ENCODE measurements at regions of chr13 and their contacts with region 1.

Region 1: DNA sequence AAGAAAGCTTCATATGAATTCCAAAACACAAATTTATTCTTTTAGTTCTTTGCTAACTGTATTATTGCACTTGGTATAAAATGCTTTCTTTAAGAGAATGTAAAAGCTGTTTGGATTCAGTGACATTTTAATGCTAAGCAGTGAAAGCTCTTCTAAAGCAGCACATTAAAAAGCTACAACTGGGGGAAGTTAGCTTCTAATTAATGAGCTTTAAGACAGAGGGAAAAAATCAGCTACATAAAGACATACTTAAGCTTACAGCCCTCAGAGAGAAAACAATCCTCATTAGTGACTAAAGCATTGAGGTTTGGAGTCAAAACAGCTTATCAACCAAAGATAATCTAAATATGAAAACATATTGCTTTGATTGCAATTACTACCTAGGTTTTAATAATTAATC is 1222.2 kb upstream of the SPRY2 start:
- DNase-seq: no peak
- H3K4me3 ChIP-seq: no peak overlapping the region
- H3K27ac ChIP-seq: no peak overlapping the region
- H3K4me1 ChIP-seq: no peaks in the 10 kb centered on the region
- H3K27me3 ChIP-seq: no peaks in the 10 kb centered on the region
- CTCF ChIP-seq: no peak

Region 2: DNA sequence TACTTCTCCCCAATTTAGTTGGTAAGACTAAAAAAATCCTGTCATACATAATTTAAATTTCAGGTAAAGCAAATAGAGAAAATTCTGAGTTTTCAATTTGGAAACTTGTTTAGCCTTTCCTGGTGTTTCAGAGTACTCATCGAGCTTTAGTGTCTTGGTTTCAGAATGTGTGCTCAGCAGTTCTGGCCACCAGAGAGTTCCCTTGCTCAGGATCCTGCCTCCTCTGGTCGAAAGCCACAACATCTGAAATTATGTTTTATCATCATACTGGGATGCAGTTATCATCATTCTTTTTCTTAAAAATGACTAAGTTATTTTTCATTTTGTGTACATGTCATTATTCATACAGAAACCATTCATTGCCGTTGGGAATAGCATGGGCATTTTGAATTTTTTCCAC is 959.0 kb before region 1 on chr13:
- CTCF ChIA-PET with region 1: no interaction called
- POLR2A ChIA-PET with region 1: no interaction called
- intact Hi-C with region 1: no loop called
- DNase-seq: no peak
- H3K4me3 ChIP-seq: no peak overlapping the region
- H3K27ac ChIP-seq: no peak overlapping the region
- H3K4me1 ChIP-seq: no peaks in the 10 kb centered on the region
- H3K27me3 ChIP-seq: no peaks in the 10 kb centered on the region
- CTCF ChIP-seq: no peak

Region 3: DNA sequence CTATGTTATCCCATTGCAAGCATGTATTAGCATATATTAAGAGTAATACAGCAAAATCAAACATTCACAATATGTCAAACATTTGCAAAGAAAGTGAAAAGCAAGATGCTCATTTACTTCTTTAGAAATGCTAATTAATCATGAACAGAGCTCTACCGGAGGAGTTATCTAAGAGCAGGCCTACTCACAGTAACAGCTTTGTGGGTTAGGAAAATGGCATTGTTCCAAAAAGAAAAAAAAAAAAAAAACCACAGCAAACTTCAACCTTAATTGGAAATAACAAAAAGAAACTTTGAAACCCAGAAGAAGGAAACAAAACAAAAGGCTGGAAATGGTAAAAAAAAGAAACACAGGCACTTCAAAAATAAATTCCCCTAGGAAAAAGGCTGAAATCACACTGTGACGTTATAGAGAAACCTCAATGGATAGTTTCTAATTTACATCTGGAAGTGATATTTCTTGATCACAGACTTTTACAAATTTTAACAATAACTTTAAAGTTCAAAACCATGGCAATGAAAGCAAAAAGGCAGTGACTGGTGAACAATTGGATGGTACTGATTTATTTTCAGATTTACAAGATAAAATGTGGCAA is 14.6 kb after region 1 on chr13:
- CTCF ChIA-PET with region 1: no interaction called
- POLR2A ChIA-PET with region 1: interaction called, 17 read pairs
- intact Hi-C with region 1: no loop called
- DNase-seq: no peak
- H3K4me3 ChIP-seq: no peak overlapping the region
- H3K27ac ChIP-seq: no peak overlapping the region
- H3K4me1 ChIP-seq: no peaks in the 10 kb centered on the region
- H3K27me3 ChIP-seq: no peaks in the 10 kb centered on the region
- CTCF ChIP-seq: no peak

Region 4: DNA sequence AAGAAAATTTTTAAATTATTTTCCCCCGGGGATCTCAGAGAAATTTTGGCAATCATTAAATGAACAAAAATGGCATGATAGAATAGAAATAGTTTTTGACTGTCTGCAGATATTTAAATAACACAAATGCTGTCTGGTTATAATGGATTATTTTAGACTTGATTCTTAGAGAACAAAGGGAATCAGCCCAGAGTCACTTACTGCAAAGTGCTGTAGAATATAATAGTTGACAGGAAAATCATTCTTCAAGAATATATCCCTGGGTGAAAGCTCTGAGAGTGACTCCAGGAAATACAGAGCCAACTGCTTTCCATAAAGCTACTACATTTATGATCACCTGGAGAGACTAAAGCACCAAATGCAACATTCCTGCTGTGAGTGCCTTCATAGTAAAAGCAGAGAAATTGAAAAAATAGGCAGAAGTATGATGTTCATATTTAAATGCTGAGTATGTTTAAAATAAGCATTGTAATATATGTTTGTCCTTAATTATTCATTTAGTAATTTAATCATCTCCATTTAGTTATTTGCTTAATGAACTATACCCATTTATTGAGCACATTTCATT is 553.4 kb after region 1 on chr13:
- CTCF ChIA-PET with region 1: no interaction called
- POLR2A ChIA-PET with region 1: no interaction called
- intact Hi-C with region 1: no loop called
- DNase-seq: no peak
- H3K4me3 ChIP-seq: no peak overlapping the region
- H3K27ac ChIP-seq: no peak overlapping the region
- H3K4me1 ChIP-seq: no peaks in the 10 kb centered on the region
- H3K27me3 ChIP-seq: no peaks in the 10 kb centered on the region
- CTCF ChIP-seq: no peak

Measured in PC-9 (cell line).